Naive thymus-derived CD4-positive, alpha-beta T cell (primary cell): ENCODE measurements at regions of chr19 and their contacts with region 1.

Region 1: DNA sequence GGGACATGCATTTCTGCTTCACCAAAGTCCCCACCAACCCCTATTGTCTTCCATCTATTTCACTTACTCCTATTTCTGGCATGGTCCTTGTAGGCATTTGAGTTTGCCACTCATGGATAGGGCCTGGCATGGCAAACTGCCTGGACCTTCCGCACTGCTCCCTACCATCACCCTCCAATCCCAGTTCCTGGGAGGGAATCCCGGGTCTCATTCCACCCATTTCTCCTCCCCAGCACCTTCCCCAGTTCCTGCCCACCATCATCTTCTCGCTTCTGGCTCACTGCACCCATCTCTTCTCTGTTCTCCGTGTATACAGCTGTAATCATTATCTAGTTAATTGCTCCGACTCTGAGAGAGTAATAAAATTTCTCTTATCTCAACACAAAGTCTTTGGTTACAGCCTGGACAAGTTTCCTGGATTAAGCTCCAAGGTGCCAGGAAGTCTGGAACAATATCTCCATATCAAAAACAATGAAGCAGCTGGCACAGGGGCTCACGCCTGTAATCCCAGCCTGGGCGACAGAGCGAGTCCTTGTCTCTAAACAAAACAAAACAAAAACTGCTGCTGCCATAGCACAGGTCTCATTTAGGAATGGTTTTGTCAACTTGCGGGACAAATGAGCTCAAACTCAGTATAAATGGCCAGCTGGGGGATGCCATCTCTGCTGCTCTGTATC is 17.0 kb upstream of the COX7A1 start:
- DNase-seq: no peak
- ATAC-seq: no peak
- H3K4me3 ChIP-seq: no peak overlapping the region
- H3K4me3 Mint-ChIP-seq: no peak overlapping the region
- H3K27ac ChIP-seq: no peak overlapping the region
- H3K27ac Mint-ChIP-seq: peak overlapping the region in 2 of 9 donors; percentile 6 to 18
- H3K4me1 ChIP-seq: no peaks in the 10 kb centered on the region
- H3K4me1 Mint-ChIP-seq: peaks cover 0 to 5% (median 0%) of the 10 kb centered on the region in 7 donors
- H3K27me3 ChIP-seq: no peaks in the 10 kb centered on the region
- H3K27me3 Mint-ChIP-seq: no peaks in the 10 kb centered on the region

Region 2: DNA sequence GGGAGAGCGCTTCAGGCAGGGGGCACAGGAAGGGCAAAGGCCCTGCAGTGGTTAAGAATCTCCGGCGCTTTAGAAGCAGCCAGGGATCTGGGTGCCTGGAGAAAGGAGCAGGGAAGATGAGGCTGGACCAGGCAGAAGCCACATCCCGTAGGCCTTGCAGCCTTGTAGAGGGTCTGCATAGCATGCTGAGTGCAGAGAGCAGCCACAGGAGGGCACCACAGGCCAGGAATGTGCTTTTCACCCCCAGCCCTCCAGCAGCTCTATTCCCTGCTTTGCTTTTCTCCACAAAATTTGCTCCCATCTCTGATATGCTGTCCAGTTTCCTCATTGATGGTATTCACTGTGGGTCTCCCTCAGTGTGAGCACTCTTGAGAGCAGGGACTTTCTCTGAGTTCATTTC is 108.8 kb before region 1 on chr19:
- CTCF ChIA-PET with region 1: no interaction called
- POLR2A ChIA-PET with region 1: no interaction called
- intact Hi-C with region 1: loop called in 1 of 2 experiments (anchors 1 kb)
- DNase-seq: peak in 1 of 9 donors; percentile 27
- ATAC-seq: peak; percentile 37
- H3K4me3 ChIP-seq: no peak overlapping the region
- H3K4me3 Mint-ChIP-seq: no peak overlapping the region
- H3K27ac ChIP-seq: no peak overlapping the region
- H3K27ac Mint-ChIP-seq: no peak overlapping the region
- H3K4me1 ChIP-seq: peaks cover 2 to 3% of the 10 kb centered on the region in 2 donors
- H3K4me1 Mint-ChIP-seq: peaks cover 3 to 21% (median 8%) of the 10 kb centered on the region in 7 donors
- H3K27me3 ChIP-seq: no peaks in the 10 kb centered on the region
- H3K27me3 Mint-ChIP-seq: no peaks in the 10 kb centered on the region

Region 3: DNA sequence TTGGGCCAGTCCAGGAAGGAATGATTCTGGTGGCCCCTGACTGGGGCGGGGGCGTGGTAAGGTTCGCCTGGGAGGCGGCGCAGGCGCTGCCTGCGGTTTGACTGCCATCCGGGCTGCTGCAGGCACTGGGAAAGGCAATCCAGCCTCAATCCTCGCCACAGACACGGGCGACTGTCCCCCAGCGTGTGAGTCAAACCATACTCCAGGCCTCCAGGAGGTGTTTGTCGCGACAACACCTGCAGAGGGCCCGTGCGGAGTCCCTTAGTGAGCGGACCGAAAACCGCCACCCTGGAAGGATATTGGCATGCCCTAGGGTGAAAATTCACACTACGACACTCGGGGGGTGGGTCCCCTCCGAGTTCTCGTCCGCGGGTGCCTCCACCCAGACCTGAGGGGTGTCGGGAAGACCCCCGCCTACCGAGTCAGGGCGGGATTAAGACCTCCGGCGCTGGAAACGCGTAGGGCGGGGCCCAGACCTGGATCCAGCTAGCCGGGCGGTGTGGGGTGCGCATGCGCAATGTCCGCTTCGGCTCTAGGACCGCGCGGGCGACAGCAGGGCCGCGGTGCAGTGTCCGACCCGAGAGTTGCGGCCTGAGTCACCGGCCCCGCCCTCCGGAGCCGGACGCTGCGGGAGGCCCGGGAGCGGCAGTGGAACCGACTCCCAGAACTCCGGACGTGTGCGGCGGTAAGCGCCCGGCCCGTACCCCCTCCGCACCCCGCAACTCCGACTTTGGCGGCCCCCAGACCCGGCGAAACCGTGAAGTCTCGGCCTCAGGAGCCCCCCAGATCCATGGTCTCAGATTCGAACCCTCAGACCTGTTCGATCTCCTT is 29.5 kb before region 1 on chr19 and contains the start of gene CAPNS1:
- CTCF ChIA-PET with region 1: interaction called, 4 read pairs
- POLR2A ChIA-PET with region 1: no interaction called
- intact Hi-C with region 1: loop called (anchors 1 kb)
- DNase-seq: peak; percentile 82 to 95 (median 86)
- ATAC-seq: peak; percentile 83
- H3K4me3 ChIP-seq: peak within 1 kb of the TSS; percentile 99
- H3K4me3 Mint-ChIP-seq: peak within 1 kb of the TSS; percentile 91 to 98 (median 95)
- H3K27ac ChIP-seq: peak within 1 kb of the TSS; percentile 87
- H3K27ac Mint-ChIP-seq: peak within 1 kb of the TSS; percentile 85 to 97 (median 91)
- H3K4me1 ChIP-seq: peaks cover 6 to 9% of the 10 kb centered on the region in 2 donors
- H3K4me1 Mint-ChIP-seq: peaks cover 10 to 25% (median 15%) of the 10 kb centered on the region in 7 donors
- H3K27me3 ChIP-seq: no peaks in the 10 kb centered on the region
- H3K27me3 Mint-ChIP-seq: no peaks in the 10 kb centered on the region
- total RNA-seq, gene CAPNS1: 197 to 473 (median 207) TPM